HEK293 (cell line): ENCODE measurements at regions of chr18 and their contacts with region 1.

Region 1: DNA sequence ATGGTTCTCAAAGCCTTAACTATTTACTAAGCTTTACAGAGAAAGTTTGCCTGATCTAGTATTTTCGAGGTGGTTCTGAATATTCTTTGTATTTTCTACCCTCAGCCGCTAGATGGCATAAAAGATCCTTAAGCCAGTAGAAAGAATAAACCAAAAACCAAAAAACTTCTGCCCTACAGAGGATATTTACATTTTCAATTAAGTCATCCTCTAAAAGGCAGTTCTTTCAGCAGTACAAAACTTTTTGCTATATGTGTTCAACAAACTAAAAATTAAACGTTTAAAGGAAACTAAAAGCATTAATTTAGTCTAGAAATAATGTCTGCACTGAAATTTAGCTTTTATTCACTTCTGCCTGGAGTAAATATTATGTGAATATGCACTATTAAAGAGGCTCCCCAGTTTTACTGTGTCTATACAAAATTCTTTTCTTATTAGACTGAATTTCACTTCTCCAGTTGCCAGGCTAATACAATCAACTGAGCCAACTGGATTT is 297.5 kb downstream of the PIEZO2 start:
- H3K4me3 ChIP-seq: no peak overlapping the region
- H3K27ac ChIP-seq: no peak overlapping the region
- H3K4me1 ChIP-seq: peaks cover 4% of the 10 kb centered on the region; the same call in 1 of the 2 replicates
- CTCF ChIP-seq: peak; percentile 44; the same call in 1 of the 2 replicates

Region 2: DNA sequence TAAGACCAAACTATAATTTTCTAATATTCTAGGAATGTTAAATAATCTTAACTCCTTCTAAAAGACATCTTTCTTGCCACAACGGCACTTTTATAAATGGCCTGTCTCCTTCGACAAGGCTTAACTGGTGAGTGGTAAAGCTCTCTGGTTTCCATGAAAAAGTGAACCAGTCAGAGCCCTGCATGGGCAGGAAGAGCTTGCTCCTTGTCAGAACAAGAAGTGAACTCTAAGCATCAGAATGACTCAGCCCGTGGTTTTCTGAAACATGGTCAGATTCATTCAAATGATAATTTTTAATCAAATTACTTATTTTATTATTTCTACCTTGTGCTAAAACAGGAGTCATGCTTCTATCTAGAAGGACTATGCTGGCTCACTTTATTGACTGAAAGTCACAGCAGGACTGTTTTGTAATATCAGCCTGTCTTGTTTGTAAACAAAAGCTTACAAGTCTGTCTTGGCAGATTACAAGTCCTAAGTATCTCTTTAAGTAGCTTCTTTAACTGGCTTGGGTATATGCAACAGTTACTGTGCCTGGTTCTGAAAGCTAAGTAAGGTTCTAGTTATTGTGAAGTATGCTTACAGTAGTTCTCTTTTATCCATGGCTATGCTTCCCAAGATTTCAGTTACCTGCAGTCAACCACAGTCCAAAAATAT is 80.7 kb before region 1 on chr18:
- CTCF ChIA-PET with region 1: no interaction called
- POLR2A ChIA-PET with region 1: no interaction called
- H3K4me3 ChIP-seq: no peak overlapping the region
- H3K27ac ChIP-seq: no peak overlapping the region
- H3K4me1 ChIP-seq: no peaks in the 10 kb centered on the region
- CTCF ChIP-seq: no peak

Region 3: DNA sequence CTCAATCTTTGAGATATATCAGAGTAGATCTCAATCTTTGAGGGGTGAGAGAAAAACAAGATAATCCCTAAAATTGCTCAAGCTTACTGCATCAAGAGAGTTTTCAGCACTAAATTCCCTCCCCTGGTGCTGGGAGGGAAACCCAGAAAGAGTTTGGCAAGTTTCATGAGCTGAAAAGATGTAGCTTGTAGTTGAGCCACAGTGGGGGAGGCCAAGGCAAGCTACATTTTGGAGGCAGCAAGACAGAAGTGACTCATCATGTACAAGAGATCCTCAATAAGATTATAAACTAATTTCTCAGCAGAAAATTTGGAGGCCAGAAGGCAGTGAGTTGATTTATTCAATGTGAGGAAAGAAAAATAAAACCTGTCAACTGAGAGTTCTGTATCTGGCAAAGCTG is 10.7 kb before region 1 on chr18:
- CTCF ChIA-PET with region 1: interaction called, 25 read pairs
- POLR2A ChIA-PET with region 1: no interaction called
- H3K4me3 ChIP-seq: no peak overlapping the region
- H3K27ac ChIP-seq: no peak overlapping the region
- H3K4me1 ChIP-seq: no peaks in the 10 kb centered on the region
- CTCF ChIP-seq: no peak

Region 4: GRCh38 chr18:11040823-11041656 is 189.2 kb after region 1 on chr18:
- CTCF ChIA-PET with region 1: interaction called, 78 read pairs
- POLR2A ChIA-PET with region 1: no interaction called
- H3K4me3 ChIP-seq: no peak overlapping the region
- H3K27ac ChIP-seq: no peak overlapping the region
- H3K4me1 ChIP-seq: peaks cover 2% of the 10 kb centered on the region; the same call in 1 of the 2 replicates
- CTCF ChIP-seq: no peak

Region 5: DNA sequence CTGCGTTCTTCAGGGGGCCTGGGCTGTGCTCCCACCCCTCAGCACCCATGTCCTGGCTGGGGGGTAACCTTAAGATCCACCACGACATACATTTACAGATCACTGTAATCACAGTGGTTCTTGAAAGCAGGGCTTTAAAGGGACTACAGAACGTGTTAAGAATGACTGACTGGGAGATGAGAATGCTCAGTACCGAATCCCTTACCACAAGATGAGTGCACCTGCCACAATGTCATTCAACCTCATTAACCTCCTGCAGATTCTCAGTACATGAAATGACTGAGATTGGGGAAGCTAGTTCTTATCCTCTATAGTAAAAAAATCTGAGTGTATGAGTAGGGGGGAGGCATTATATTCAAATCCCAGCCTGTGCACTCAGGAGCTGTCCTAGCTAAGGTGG is 308.0 kb after region 1 on chr18:
- CTCF ChIA-PET with region 1: interaction called, 119 read pairs
- POLR2A ChIA-PET with region 1: no interaction called
- H3K4me3 ChIP-seq: no peak overlapping the region
- H3K27ac ChIP-seq: no peak overlapping the region
- H3K4me1 ChIP-seq: no peaks in the 10 kb centered on the region
- CTCF ChIP-seq: no peak

Region 6: DNA sequence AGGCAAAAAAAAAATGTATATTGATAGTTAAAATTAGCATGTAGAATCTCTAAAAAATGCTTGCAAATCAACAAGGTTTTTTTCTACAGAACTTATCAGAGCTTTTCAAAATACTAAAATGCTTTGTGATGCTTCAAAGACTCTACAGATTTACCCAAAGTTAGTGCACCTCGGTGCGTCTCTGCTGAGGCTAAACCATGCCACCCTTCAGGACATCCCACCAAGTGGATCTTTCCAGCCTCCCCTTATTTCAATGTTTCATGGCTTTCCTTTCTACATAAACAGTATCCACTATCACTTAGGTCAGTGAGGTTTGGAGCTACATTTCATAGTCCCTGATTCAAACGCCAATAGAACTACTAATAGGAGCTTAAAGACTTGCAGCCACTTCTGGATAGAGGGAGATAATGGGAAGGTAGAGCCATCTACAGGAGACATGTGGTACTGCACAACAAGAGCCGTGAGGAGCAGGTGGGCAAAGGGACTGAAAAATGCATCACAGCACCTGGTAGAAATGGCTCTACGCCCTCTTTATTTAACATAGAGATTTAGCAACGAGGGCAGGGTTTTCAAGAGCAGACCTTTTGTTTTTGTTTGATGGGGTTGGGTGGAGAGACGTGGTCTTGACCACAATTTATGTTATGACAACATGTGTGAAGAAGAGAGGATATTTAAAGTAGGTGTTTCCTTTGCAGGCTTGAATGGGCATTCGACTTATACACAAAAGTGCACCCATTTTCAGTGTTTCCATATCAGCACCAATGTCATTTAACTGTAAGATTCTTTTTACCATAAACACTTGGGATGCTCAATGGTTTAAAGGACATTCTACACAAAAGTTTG is 701.4 kb after region 1 on chr18:
- CTCF ChIA-PET with region 1: interaction called, 19 read pairs
- POLR2A ChIA-PET with region 1: no interaction called
- H3K4me3 ChIP-seq: no peak overlapping the region
- H3K27ac ChIP-seq: no peak overlapping the region
- H3K4me1 ChIP-seq: no peaks in the 10 kb centered on the region
- CTCF ChIP-seq: peak; percentile 73; the same call in 1 of the 2 replicates